A673 (cell line): ENCODE measurements at regions of chr1 and their contacts with region 1.

Region 1: GRCh38 chr1:174815036-174815435 is 184.7 kb upstream of the CACYBP start:
- DNase-seq: no peak
- H3K4me3 ChIP-seq: no peak overlapping the region
- H3K27ac ChIP-seq: no peak overlapping the region
- H3K4me1 ChIP-seq: peaks cover 4% of the 10 kb centered on the region
- H3K27me3 ChIP-seq: no peaks in the 10 kb centered on the region
- CTCF ChIP-seq: no peak

Region 2: GRCh38 chr1:174761335-174761734 is 53.7 kb before region 1 on chr1:
- CTCF ChIA-PET with region 1: no interaction called
- POLR2A ChIA-PET with region 1: no interaction called
- intact Hi-C with region 1: no loop called
- DNase-seq: no peak
- H3K4me3 ChIP-seq: no peak overlapping the region
- H3K27ac ChIP-seq: no peak overlapping the region
- H3K4me1 ChIP-seq: no peaks in the 10 kb centered on the region
- H3K27me3 ChIP-seq: no peaks in the 10 kb centered on the region
- CTCF ChIP-seq: no peak

Region 3: GRCh38 chr1:174850726-174851125 is 35.7 kb after region 1 on chr1:
- CTCF ChIA-PET with region 1: no interaction called
- POLR2A ChIA-PET with region 1: no interaction called
- intact Hi-C with region 1: loop called (anchors 2 kb)
- DNase-seq: no peak
- H3K4me3 ChIP-seq: no peak overlapping the region
- H3K27ac ChIP-seq: no peak overlapping the region
- H3K4me1 ChIP-seq: no peaks in the 10 kb centered on the region
- H3K27me3 ChIP-seq: no peaks in the 10 kb centered on the region
- CTCF ChIP-seq: no peak